Gastrocnemius medialis (tissue), 4 donors: ENCODE measurements at regions of chr5 and their contacts with region 1.

Region 1: DNA sequence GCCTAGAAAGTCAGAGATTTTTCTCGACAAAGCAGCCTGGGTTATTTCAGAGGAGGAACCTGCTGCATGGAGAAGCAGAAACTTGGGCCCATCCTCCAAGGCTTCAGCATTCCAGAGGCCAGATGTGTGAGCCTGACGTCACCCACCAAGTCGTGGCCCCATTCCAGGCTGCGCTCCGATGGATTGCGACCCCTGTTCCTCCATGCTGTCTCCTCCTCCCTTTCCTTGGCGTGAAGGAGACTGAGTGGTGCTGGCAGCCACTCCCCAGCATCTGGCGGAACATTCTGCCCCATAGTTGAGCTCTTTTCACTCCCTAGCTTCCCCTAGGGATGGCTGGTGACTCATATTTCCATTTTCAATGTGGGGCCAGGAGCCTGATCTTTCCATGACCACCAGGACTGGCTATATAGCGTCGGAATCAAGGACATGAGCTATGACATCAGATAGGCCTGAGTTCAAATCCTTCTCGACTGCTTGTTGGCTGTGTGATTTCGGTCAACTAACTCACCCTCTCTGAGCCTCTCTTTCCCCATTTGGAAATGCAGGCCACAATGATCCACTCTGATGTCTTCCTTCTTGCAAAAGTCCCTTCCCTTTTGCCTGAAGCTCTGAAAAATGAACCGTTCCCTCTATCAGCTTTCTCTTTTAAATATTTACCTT is 24.5 kb upstream of the DUSP1 start:
- DNase-seq: peak; percentile 94 to 96
- ATAC-seq: peak; percentile 78 to 88
- H3K4me3 ChIP-seq: peak overlapping the region in 2 of 4 donors; percentile 5 to 7
- H3K27ac ChIP-seq: peak overlapping the region; percentile 88 to 92 (median 90)
- H3K4me1 ChIP-seq: peaks cover 52 to 60% of the 10 kb centered on the region in 2 donors
- H3K27me3 ChIP-seq: no peaks in the 10 kb centered on the region
- CTCF ChIP-seq: peak in 3 of 5 experiments; percentile 26 to 39 (median 34)
- POLR2A ChIP-seq: peak in 1 of 2 donors; percentile 63

Region 2: DNA sequence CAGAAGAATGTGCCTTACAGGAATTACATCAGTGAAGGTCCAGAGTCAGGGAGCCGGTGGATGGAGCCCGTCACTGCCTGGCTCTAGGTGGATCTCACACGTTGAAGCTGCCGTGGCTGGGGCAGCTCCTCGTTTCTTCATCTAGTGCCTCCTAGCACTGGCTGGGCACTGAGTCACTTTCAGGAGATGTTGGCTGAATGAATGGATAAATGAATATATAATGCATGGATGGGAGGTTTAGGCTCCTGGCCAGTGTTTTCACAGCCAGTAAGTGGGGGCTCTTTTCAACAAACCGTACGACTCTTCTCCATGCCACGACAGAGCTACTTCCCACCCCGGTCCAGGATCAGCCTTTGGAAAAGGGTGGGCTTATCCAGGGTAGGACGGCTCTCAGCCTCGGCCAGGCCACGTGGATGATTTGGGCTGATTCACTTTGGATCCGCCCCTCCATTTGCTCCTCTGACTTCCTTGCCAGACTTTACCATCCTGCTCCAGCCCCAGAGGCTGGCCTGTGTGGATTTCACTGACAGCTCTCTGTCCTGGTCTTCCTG is 339.9 kb before region 1 on chr5:
- in situ Hi-C with region 1: no loop called
- intact Hi-C with region 1: no loop called
- DNase-seq: no peak
- ATAC-seq: no peak
- H3K4me3 ChIP-seq: no peak overlapping the region
- H3K27ac ChIP-seq: no peak overlapping the region
- H3K4me1 ChIP-seq: peaks cover 0 to 5% of the 10 kb centered on the region in 2 donors
- H3K27me3 ChIP-seq: no peaks in the 10 kb centered on the region
- CTCF ChIP-seq: no peak
- POLR2A ChIP-seq: no peak

Region 3: DNA sequence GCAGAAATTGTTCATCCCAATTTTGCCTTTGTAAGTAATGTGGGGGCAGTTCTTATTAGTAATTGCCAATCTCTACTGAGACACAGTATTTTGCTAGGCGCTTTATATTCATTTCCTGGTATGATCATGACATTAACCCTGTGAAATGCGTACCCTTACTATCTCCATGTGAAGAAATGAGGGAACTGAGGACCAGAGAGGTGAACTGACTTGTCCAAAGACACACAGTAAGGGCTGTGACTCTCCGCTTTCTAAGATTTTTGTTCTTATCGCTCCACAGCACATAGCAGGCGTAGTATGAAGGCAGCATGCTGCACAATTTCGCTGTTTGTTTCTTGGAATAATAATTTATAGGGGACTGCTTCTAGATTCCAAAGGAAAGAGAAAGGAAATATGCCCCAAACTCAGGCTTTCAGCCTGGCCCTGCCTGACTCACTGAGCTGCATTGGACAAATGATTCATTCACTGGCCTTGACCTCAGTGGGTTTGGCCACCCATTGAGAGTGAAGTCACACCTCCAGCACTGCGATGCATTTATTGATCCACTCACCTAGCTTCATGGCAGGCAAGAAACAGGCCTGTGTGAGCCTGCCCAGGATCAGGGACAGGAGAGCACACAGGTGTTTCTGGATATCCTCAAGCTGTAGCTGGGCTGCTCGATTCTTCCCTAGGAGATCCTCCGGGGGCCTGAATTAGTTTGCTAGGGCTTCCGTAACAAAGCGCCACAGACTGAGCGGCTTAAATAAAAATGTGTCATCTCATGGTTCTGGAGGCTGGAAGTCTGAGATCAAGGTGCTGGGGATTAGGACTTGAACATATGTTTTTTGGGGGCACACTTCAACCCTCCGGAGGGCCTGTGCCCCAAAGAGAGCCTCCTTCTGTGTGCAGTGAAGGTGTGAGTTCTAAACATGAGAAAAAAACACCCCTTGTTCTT is 17.3 kb before region 1 on chr5:
- in situ Hi-C with region 1: no loop called
- intact Hi-C with region 1: loop called (anchors 1 kb)
- DNase-seq: peak; percentile 44 to 64
- ATAC-seq: peak; percentile 36 to 39
- H3K4me3 ChIP-seq: no peak overlapping the region
- H3K27ac ChIP-seq: peak overlapping the region; percentile 96 to 99 (median 96)
- H3K4me1 ChIP-seq: peaks cover 32 to 63% of the 10 kb centered on the region in 2 donors
- H3K27me3 ChIP-seq: no peaks in the 10 kb centered on the region
- CTCF ChIP-seq: no peak
- POLR2A ChIP-seq: no peak

Region 4: GRCh38 chr5:172868924-172869591 is 73.6 kb after region 1 on chr5:
- in situ Hi-C with region 1: loop called in 1 of 4 experiments (anchors 10 kb)
- intact Hi-C with region 1: loop called (anchors 2 kb)
- DNase-seq: peak; percentile 94 to 97
- ATAC-seq: peak; percentile 65 to 67
- H3K4me3 ChIP-seq: peak overlapping the region in 3 of 4 donors; percentile 6 to 23 (median 18)
- H3K27ac ChIP-seq: peak overlapping the region; percentile 85 to 98 (median 94)
- H3K4me1 ChIP-seq: peaks cover 93 to 95% of the 10 kb centered on the region in 2 donors
- H3K27me3 ChIP-seq: no peaks in the 10 kb centered on the region
- CTCF ChIP-seq: peak in 4 of 5 experiments; percentile 41 to 52 (median 45)
- POLR2A ChIP-seq: peak; percentile 9 to 68